Activated naive CD4-positive, alpha-beta T cell treated with anti-CD3 and anti-CD28 coated beads for 36 hours (primary cell): ENCODE measurements at regions of chr12 and their contacts with region 1.

Region 1: DNA sequence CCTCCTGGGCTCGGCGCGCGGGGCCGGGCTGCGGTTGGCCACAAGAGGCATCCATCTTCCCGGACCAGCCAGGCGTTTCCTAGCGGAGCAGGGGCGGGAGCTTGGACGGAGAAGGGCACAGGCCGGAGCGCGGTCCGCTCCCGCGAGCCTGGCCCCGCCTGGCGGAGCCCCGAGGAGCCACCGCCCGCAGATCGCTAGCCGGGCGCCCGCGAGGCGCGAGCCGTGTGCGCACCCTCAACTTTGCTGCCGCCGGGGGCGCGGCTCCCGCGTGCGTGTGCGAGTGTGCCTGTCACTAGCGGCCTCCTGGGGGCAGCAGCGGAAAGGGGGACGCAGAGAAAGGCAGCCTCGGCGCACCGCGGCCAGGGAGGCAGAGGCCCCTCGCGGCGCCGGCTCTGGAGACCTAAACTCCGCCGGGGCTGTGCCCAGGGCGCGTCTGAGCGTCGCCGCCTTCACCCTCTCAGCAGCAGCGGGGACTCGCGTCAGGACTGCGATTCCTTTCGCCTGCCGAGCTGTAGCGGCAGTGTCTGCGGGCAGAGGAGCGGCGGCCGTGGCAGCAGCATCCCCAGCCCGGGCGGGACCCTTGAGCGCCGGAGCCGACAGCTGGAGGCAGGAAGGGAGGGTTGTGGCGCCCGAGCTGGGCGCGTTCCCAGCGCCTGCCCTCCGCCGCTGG is 644 bp upstream of the SRGAP1 start:
- DNase-seq: peak; percentile 84
- H3K4me3 Mint-ChIP-seq: peak overlapping the region; percentile 62
- H3K27ac Mint-ChIP-seq: no peak overlapping the region
- H3K4me1 Mint-ChIP-seq: peaks cover 6% of the 10 kb centered on the region
- H3K27me3 Mint-ChIP-seq: peaks cover 31% of the 10 kb centered on the region

Region 2: DNA sequence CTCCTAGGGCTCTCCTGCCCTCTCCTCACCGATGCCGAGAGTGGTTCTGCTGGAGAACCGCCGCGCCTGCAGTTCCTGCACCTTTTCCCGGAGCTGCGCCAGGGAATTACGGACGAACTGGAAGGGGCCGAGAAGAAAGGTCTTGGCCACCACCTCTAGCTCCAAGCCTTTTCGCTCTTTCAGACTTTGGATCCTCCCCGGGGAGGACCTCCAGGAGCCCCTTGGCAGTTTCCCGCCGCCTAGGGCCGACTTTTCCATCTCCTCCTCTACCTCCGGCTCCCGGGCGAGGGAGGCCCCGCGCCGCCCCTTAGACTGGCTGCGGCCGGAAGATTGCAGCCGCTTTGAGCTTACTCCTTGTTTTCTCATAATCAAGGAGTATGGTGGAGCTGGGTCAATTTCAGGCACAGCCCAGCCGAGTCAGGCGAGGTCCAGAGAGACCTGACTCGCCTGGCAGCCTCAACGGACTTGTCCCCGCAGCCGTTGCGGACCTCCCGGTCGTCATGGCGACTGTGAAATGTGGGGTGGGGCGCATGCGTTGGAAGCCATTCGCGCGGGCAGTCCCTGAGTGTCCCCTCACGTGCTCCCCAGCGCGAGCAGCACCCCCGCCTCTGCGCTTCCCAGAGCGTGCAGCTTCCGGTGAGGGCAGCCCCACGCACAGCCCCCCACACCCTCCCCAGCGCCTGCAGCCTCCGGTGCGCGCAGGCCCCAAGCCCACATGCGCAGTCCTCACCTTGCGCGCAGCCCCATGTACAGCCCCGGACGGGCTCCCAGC is 175.6 kb before region 1 on chr12 and contains the start of gene DPY19L2:
- CTCF ChIA-PET with region 1: no interaction called
- intact Hi-C with region 1: loop called (anchors 2 kb)
- DNase-seq: peak; percentile 69
- H3K4me3 Mint-ChIP-seq: peak within 1 kb of the TSS; percentile 79
- H3K27ac Mint-ChIP-seq: peak within 1 kb of the TSS; percentile 36
- H3K4me1 Mint-ChIP-seq: peaks cover 10% of the 10 kb centered on the region
- H3K27me3 Mint-ChIP-seq: peaks cover 29% of the 10 kb centered on the region
- total RNA-seq, gene DPY19L2: 0.91 to 1.1 TPM

Region 3: DNA sequence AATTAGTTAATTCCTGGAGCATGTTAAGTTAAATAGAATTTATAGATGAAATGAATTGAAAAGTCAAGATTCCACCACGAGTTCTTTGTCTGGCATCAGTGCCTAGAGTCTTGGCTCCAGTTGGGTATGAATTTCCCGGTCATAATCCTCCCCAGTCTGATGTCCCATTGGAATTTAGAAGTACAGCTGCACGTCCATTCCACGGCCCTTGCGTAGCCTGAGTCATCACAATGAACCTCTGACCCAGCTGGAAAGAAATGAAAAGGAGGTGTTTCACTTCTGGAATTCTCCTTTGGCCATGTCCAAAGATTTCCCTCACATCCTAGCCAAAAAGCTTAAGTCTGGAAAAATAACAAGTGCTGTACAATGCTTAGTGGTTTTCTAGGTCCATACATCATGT is 255.5 kb after region 1 on chr12:
- CTCF ChIA-PET with region 1: no interaction called
- intact Hi-C with region 1: loop called (anchors 10 kb)
- DNase-seq: no peak
- H3K4me3 Mint-ChIP-seq: no peak overlapping the region
- H3K27ac Mint-ChIP-seq: no peak overlapping the region
- H3K4me1 Mint-ChIP-seq: no peaks in the 10 kb centered on the region
- H3K27me3 Mint-ChIP-seq: peaks cover 6% of the 10 kb centered on the region

Region 4: GRCh38 chr12:64236549-64236948 is 392.7 kb after region 1 on chr12:
- CTCF ChIA-PET with region 1: interaction called, 3 read pairs
- intact Hi-C with region 1: loop called (anchors 1 kb)
- DNase-seq: peak; percentile 9
- H3K4me3 Mint-ChIP-seq: no peak overlapping the region
- H3K27ac Mint-ChIP-seq: no peak overlapping the region
- H3K4me1 Mint-ChIP-seq: no peaks in the 10 kb centered on the region
- H3K27me3 Mint-ChIP-seq: peaks cover 2% of the 10 kb centered on the region

Region 5: DNA sequence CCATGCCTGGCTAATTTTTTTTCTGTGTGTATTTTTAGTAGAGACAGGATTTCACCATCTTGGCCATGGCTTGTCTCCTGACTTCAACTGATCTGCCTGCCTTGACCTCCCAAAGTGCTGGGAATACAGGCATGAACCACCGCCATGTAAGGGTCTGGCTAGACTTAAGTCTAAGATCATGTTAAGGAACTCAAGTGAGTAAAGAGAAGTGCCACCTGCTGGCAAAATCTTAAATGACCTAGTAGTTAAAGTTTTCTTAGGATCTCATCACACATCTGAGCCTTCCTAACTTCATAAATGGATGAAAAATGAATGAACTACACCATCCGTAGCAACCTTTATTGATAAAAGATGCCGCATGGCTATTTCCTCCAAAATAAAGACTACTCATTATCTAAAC is 548.4 kb after region 1 on chr12:
- CTCF ChIA-PET with region 1: interaction called, 3 read pairs
- intact Hi-C with region 1: loop called (anchors 1 kb)
- DNase-seq: peak; percentile 23
- H3K4me3 Mint-ChIP-seq: no peak overlapping the region
- H3K27ac Mint-ChIP-seq: no peak overlapping the region
- H3K4me1 Mint-ChIP-seq: peaks cover 11% of the 10 kb centered on the region
- H3K27me3 Mint-ChIP-seq: no peaks in the 10 kb centered on the region